ENCODE measurements at regions of chr1 and their contacts with region 1.

Region 1: DNA sequence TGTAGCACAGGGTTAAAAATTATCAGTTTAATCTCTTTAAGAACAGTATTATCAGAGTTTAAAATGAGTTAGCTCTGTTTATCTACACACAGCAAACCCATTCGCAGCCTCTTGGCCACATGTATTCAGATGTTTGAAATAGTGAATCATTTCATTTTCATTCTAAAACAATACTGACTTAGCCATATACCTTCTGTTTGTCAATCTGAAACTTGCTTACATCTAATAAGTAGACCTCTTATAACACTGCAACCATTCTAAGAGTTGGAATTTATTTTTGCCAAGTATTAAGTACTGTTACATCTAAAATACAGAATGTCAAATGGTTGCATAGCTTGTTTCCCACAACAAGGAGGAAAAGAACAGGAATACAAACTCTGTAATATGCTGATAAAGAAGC is 25.4 kb downstream of the ANGEL2 start:
- DNase-seq: no peak
- ATAC-seq: no peak
- H3K4me3 ChIP-seq: no peak overlapping the region
- H3K27ac ChIP-seq: no peak overlapping the region
- H3K4me1 ChIP-seq: peaks cover 6% of the 10 kb centered on the region
- H3K27me3 ChIP-seq: no peaks in the 10 kb centered on the region
- CTCF ChIP-seq: no peak
- POLR2A ChIP-seq: no peak
- RAD21 ChIP-seq: no peak

Region 2: DNA sequence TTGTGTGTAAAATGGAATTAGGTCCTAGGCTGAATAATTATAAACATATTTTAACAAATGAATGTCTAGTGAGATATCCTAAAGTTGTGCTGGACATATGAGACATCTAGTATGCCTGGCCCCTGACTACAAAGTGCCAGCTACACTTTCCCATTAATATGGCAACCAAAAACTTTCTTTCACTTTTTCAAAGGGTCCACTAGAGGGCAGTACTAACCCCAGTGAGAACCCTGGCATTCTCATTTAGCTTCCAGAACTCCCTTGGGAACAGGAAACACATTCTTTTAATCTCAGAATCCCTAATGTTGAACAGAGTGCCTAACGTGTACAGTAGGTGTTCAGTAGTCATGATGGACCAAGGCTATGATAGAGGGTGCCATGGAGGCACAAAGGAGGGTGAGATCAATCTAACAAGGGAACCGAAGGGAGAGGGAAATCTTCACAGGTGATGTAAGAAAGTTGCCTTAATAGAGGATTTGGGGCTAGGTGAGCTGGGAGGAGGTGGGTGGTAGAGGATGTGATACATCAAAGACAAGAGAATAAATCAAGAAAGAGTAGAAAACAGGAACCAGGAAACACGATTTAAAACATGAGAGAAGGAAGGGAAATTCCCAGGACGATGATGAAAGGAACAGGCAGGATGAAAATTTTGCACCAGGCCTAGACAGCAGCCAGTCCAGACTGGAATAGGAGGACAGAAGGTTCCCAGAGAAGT is 240.3 kb before region 1 on chr1:
- CTCF ChIA-PET with region 1: interaction called, 3 read pairs
- POLR2A ChIA-PET with region 1: no interaction called
- dilution Hi-C with region 1: no loop called
- in situ Hi-C with region 1: no loop called
- intact Hi-C with region 1: loop called (anchors 1 kb)
- DNase-seq: peak; percentile 79
- ATAC-seq: peak; percentile 85
- H3K4me3 ChIP-seq: no peak overlapping the region
- H3K27ac ChIP-seq: peak overlapping the region; percentile 78; the same call in 1 of the 2 replicates
- H3K4me1 ChIP-seq: peaks cover 8% of the 10 kb centered on the region
- H3K27me3 ChIP-seq: no peaks in the 10 kb centered on the region
- CTCF ChIP-seq: peak; percentile 73
- POLR2A ChIP-seq: no peak
- RAD21 ChIP-seq: peak; percentile 60

Region 3: DNA sequence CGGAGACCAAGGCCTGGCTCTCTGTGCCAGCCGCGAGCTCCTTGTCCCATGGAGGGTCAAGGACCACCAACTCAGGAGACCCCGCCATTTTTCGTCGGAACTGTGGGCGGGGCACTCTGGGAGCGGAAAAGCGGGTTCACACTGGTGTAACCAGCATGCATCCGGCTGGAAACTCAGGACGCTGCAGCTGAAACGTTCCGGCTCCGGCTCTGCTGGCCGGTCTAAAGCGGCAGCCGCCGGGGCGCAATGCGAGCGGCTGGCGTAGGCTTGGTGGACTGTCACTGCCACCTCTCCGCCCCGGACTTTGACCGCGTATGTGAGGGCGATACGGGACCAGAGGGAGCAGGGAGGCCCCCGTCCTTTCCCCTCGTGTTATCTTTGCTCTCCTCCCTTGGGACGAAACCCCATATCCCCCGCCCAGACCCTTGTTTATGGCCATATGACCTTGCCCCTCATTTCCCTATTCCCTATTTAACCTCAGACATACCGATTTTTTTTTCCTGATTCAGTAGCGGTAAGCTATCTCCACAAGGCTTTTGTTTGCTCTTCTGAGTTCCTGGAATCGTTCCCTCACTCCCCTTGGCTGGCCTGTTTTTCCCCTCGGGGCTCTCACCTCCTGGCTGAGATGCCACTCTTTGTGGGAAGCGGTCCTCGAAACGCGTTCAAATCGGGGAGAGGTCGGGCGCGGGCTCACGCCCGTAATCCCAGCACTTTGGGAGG is 198.4 kb before region 1 on chr1 and contains the starts of genes NSL1 and TATDN3:
- CTCF ChIA-PET with region 1: no interaction called
- POLR2A ChIA-PET with region 1: no interaction called
- dilution Hi-C with region 1: no loop called
- in situ Hi-C with region 1: no loop called
- intact Hi-C with region 1: loop called (anchors 2 kb)
- DNase-seq: peak; percentile 92
- ATAC-seq: peak; percentile 97
- H3K4me3 ChIP-seq: peak within 1 kb of the TSS; percentile 87
- H3K27ac ChIP-seq: peak within 1 kb of the TSS; percentile 88
- H3K4me1 ChIP-seq: 0 out of 2 replicates have a peak, but pooled peaks cover 4% of the 10 kb centered on the region
- H3K27me3 ChIP-seq: no peaks in the 10 kb centered on the region
- CTCF ChIP-seq: no peak
- POLR2A ChIP-seq: peak; percentile 80
- RAD21 ChIP-seq: peak; percentile 22; the same call in 1 of the 2 replicates
- total RNA-seq, gene NSL1: 32.8 and 42.5 TPM in 2 replicates
- total RNA-seq, gene TATDN3: 12.0 and 12.8 TPM in 2 replicates

Region 4: DNA sequence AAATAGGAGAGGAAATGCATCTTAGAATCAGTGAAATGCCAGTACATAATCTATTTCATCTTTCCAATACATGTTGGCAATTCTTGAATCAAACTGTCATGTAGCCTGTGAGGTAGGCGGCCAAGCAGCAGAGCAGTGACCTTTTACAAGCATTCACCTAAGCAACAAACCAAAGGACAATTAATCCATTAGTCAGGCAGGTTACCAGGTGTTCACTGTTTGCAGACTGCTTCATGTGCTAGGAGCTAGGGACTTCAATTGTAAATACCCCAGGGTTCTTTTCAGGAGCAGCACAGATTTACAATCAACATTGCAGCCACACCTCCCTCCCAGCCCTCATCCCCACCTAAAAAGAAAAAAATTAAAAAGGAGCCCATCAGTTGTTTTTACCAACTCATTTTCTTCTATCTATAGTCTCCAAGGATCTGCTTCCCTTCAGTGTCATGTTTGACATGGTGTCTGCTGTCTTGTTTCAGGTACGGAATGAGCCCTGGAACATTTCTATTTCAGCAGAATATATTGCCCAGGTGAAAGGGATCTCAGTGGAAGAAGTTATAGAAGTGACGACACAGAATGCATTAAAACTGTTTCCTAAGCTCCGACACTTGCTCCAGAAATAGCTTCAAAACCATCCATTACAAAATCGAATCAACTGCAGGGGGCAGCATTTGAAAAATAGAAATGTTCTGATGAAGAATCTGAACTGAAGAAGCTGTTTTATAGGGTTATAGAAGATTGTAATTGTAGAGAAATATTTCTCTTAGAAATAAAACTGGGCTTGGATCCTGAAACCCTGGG is 175.5 kb before region 1 on chr1:
- CTCF ChIA-PET with region 1: interaction called, 9 read pairs
- POLR2A ChIA-PET with region 1: no interaction called
- dilution Hi-C with region 1: no loop called
- in situ Hi-C with region 1: loop called (anchors 10 kb)
- intact Hi-C with region 1: loop called (anchors 2 kb)
- DNase-seq: no peak
- ATAC-seq: no peak
- H3K4me3 ChIP-seq: no peak overlapping the region
- H3K27ac ChIP-seq: no peak overlapping the region
- H3K4me1 ChIP-seq: no peaks in the 10 kb centered on the region
- H3K27me3 ChIP-seq: no peaks in the 10 kb centered on the region
- CTCF ChIP-seq: peak; percentile 30
- POLR2A ChIP-seq: no peak
- RAD21 ChIP-seq: 0 out of 2 replicates have a peak, but pooled peaks have one; percentile 10

Region 5: GRCh38 chr1:212928323-212929291 is 61.7 kb before region 1 on chr1:
- CTCF ChIA-PET with region 1: no interaction called
- POLR2A ChIA-PET with region 1: no interaction called
- dilution Hi-C with region 1: no loop called
- in situ Hi-C with region 1: no loop called
- intact Hi-C with region 1: loop called (anchors 1 kb)
- DNase-seq: peak; percentile 36
- ATAC-seq: no peak
- H3K4me3 ChIP-seq: no peak overlapping the region
- H3K27ac ChIP-seq: no peak overlapping the region
- H3K4me1 ChIP-seq: peaks cover 5% of the 10 kb centered on the region; the same call in 1 of the 2 replicates
- H3K27me3 ChIP-seq: peaks cover 10% of the 10 kb centered on the region
- CTCF ChIP-seq: no peak
- POLR2A ChIP-seq: no peak
- RAD21 ChIP-seq: no peak

Region 6: DNA sequence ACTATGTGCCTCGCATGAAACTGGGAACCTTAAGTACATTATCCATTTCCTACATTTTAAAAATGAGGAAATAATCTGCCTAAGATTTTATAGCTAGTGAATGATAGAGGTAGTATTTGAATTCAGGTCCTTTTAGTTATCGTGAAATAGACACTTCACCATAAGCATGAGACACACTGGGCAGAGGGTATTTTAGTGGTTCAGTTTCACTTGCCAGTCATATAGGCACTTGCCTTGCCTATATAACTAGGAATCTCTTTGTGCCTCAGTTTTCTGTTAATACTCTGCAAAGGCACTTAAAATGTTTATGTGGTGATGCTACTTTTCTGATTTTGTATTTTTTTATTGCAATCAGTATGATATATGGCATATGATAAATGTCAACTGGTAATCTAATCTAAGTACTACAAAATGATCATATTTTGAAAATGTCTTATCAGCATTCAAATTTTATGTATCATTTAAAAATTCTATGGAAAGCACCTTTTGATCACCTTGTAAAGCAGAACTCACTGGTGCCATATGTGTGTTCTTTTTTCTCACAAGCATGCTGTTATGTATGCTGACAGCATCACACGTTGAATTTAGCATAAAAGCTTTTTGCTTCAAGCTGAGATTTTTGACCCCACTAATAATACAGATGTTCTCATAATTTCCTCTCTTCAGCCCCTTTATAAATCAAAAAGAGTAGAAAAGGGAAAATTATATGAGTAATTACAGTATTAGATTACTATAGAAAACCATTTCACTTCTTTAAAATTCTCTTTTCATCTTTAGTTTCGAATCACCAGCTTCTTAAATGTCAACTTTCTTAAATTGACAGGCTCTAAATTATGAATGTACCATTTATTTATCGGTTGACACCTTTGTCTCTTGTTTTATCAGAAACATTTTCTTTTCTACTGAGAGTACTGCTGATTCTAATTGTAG is 113.4 kb after region 1 on chr1:
- CTCF ChIA-PET with region 1: no interaction called
- POLR2A ChIA-PET with region 1: no interaction called
- dilution Hi-C with region 1: no loop called
- in situ Hi-C with region 1: no loop called
- intact Hi-C with region 1: no loop called
- DNase-seq: no peak
- ATAC-seq: no peak
- H3K4me3 ChIP-seq: no peak overlapping the region
- H3K27ac ChIP-seq: no peak overlapping the region
- H3K4me1 ChIP-seq: no peaks in the 10 kb centered on the region
- H3K27me3 ChIP-seq: no peaks in the 10 kb centered on the region
- CTCF ChIP-seq: no peak
- POLR2A ChIP-seq: no peak
- RAD21 ChIP-seq: no peak